ENCODE measurements at regions of chr19 and their contacts with region 1.

Region 1: GRCh38 chr19:41641879-41642485 is 15.1 kb upstream of the CEACAM4 start:
- DNase-seq: peak; percentile 24 to 86 (median 58)
- ATAC-seq: peak; percentile 75 to 82 (median 76)
- H3K4me3 ChIP-seq: no peak overlapping the region
- H3K4me3 Mint-ChIP-seq: no peak overlapping the region
- H3K27ac ChIP-seq: no peak overlapping the region
- H3K27ac Mint-ChIP-seq: no peak overlapping the region
- H3K4me1 ChIP-seq: peaks cover 0 to 26% of the 10 kb centered on the region in 2 experiments
- H3K4me1 Mint-ChIP-seq: peaks cover 25 to 36% (median 35%) of the 10 kb centered on the region in 3 donors
- H3K27me3 ChIP-seq: peaks cover 0 to 15% of the 10 kb centered on the region in 2 experiments
- H3K27me3 Mint-ChIP-seq: peaks cover 9 to 23% of the 10 kb centered on the region in 2 donors

Region 2: GRCh38 chr19:40570313-40571004 is 1071.5 kb before region 1 on chr19:
- CTCF ChIA-PET with region 1: no interaction called
- POLR2A ChIA-PET with region 1: no interaction called
- DNase-seq: peak; percentile 85 to 100 (median 95)
- ATAC-seq: peak; percentile 86 to 90 (median 88)
- H3K4me3 ChIP-seq: peak overlapping the region in 1 of 2 donors; percentile 36
- H3K4me3 Mint-ChIP-seq: peak overlapping the region; percentile 53 to 69 (median 68)
- H3K27ac ChIP-seq: no peak overlapping the region
- H3K27ac Mint-ChIP-seq: peak overlapping the region; percentile 77 to 83
- H3K4me1 ChIP-seq: peaks cover 0 to 28% of the 10 kb centered on the region in 2 experiments
- H3K4me1 Mint-ChIP-seq: peaks cover 12 to 23% (median 13%) of the 10 kb centered on the region in 3 donors
- H3K27me3 ChIP-seq: peaks cover 8 to 39% of the 10 kb centered on the region in 2 experiments
- H3K27me3 Mint-ChIP-seq: peaks cover 3 to 23% of the 10 kb centered on the region in 2 donors

Region 3: DNA sequence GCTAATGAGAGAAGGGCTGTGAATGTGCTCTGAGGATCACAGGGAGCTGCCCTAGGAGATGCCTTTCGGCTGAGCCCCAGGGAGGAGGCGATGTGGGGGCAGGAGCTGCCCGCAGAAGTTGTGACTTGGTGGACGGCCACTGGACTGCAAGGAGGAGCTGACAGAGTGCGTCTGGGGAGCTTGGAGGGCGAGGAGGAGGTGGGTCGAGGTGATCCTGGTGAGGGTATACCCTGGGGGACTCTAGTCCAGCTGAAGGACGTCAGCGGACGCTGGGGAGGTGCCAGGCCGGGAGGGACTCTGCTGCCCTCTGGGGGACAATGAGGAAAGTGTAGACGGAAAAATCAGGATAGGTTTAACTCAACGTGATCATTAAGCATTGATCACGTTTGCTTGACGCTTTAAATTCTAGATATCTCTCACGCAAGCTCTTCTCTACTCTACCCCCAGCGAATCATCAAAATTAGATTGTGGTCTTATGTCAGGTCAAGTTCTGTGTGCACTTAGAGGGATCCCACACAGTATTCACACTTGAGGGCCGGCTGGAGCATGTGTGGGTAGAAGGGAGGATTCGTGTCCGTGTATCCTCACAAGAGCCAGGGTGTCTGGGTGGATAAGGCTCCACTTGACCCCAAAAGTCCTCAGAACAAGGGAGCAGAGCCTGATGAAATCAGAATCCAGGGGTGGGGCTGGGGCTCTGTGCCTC is 49.4 kb after region 1 on chr19:
- CTCF ChIA-PET with region 1: interaction called in 1 of 2 experiments, 19 read pairs
- POLR2A ChIA-PET with region 1: no interaction called
- DNase-seq: peak in 5 of 35 experiments; percentile 8 to 58 (median 12)
- ATAC-seq: no peak
- H3K4me3 ChIP-seq: no peak overlapping the region
- H3K4me3 Mint-ChIP-seq: no peak overlapping the region
- H3K27ac ChIP-seq: no peak overlapping the region
- H3K27ac Mint-ChIP-seq: peak overlapping the region in 1 of 2 donors; percentile 57
- H3K4me1 ChIP-seq: peaks cover 0 to 3% of the 10 kb centered on the region in 2 experiments
- H3K4me1 Mint-ChIP-seq: peaks cover 0 to 12% (median 2%) of the 10 kb centered on the region in 3 donors
- H3K27me3 ChIP-seq: peaks cover 0 to 65% of the 10 kb centered on the region in 2 experiments
- H3K27me3 Mint-ChIP-seq: peaks cover 42 to 63% of the 10 kb centered on the region in 2 donors